ENCODE measurements at regions of chr17 and their contacts with region 1.

Region 1: GRCh38 chr17:28902819-28903545 is at the start of gene DHRS13:
- DNase-seq: peak; percentile 97
- ATAC-seq: peak; percentile 90
- H3K4me3 Mint-ChIP-seq: peak within 1 kb of the TSS; percentile 82
- H3K27ac Mint-ChIP-seq: peak within 1 kb of the TSS; percentile 77
- H3K4me1 Mint-ChIP-seq: peaks cover 37% of the 10 kb centered on the region
- H3K27me3 Mint-ChIP-seq: no peaks in the 10 kb centered on the region
- CTCF ChIP-seq: peak; percentile 82
- total RNA-seq, gene DHRS13: 32.0 and 39.6 TPM in 2 replicates

Region 2: DNA sequence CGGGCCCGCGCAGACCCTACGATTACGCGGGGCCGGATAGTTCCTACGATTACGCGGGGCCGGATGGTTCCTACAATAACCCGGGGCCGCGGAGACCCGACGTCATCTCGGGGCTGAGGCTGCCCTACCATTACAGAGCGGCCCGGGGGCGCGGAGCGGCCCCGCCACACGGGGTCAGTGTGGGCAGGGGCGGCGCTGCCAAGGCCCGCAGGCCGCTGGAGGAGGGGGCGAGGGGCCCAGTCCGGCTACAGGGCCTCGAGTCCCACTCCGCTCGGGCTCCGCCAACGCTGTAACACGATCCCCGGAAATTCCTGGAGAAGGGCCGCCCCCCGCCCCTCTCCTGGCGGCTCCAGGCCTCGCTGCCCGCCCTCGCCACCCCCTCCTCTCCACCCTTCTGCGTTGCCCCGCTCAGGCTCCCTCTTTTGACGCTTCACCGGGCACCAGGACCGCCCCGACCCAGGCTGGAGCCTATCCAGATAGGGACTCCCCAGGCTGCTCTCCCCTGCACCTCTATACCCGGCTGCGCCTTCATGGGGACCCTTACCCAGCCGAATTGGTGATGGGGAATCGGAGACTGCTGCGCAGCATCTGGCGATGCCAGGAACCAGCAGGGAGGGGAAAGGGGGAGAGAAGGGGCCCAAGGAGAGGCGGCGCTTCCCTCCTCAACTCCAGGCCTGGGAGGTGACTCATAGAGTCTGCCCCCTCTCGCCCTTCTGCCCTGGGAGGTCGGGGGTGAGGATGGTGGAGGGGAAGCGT is 185.2 kb before region 1 on chr17 and contains the start of gene RAB34:
- CTCF ChIA-PET with region 1: interaction called, 3 read pairs
- POLR2A ChIA-PET with region 1: interaction called, 21 read pairs
- intact Hi-C with region 1: loop called (anchors 2 kb)
- DNase-seq: peak; percentile 46
- ATAC-seq: peak; percentile 14
- H3K4me3 Mint-ChIP-seq: peak within 1 kb of the TSS; percentile 79
- H3K27ac Mint-ChIP-seq: peak within 1 kb of the TSS; percentile 85
- H3K4me1 Mint-ChIP-seq: peaks cover 49% of the 10 kb centered on the region
- H3K27me3 Mint-ChIP-seq: no peaks in the 10 kb centered on the region
- CTCF ChIP-seq: no peak
- total RNA-seq, gene RAB34: 21.3 and 23.9 TPM in 2 replicates

Region 3: DNA sequence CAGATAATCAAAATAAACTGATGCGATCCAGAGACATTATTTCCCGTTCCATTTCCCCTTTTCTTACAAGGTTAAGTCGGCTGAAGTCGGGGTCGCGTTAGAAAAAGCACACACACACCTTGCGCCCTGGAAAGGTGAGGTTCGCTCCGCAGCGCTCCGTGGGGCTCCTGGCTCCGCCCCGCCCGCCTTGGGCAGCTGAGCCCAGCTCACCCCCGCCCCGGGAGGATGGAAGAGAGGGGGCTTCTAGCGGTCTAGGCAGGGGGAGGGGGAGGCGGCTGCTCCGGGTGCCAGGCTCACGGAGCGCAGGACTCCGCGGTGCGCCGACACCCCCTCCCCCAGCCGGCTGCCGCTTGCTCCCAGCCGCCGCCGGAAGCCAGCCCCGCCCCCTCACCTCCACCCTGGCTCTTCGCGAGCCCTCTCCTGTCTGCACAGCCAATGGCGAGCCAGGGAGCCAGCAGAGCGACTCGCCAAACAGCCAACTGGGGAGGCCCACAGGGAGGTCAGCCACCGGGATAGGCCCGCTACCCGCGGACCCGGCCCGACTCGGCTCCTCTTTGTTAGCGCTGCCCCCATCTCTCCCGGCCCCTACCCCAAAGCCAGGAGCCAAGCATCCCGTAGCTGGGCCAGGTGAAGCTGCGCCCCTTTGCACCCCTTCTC is 90.8 kb before region 1 on chr17:
- CTCF ChIA-PET with region 1: interaction called, 3 read pairs
- POLR2A ChIA-PET with region 1: no interaction called
- intact Hi-C with region 1: loop called (anchors 1 kb)
- DNase-seq: peak; percentile 89
- ATAC-seq: peak; percentile 100
- H3K4me3 Mint-ChIP-seq: peak overlapping the region; percentile 87
- H3K27ac Mint-ChIP-seq: peak overlapping the region; percentile 83
- H3K4me1 Mint-ChIP-seq: peaks cover 31% of the 10 kb centered on the region
- H3K27me3 Mint-ChIP-seq: no peaks in the 10 kb centered on the region
- CTCF ChIP-seq: no peak

Region 4: DNA sequence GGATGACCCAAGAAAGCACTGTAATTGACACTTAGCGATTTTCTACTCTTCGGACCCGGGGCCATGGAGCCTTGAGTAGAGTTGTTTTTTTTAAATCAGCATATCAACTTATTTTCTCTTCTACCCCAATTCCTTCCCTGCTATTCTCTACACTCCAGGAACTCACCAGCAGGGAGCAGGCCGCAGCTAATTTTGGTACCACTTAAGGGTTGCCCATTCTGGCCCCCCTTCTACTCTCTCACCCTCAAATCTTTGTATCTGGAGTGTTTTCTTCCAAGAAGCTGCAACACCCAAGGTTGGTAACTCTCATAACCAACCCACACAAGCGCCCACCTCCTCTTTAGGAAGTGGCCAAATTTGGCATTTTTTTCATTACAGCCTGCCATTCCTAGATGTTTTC is 53.7 kb before region 1 on chr17:
- CTCF ChIA-PET with region 1: interaction called, 4 read pairs
- POLR2A ChIA-PET with region 1: interaction called, 7 read pairs
- intact Hi-C with region 1: loop called (anchors 1 kb)
- DNase-seq: no peak
- ATAC-seq: no peak
- H3K4me3 Mint-ChIP-seq: no peak overlapping the region
- H3K27ac Mint-ChIP-seq: no peak overlapping the region
- H3K4me1 Mint-ChIP-seq: peaks cover 3% of the 10 kb centered on the region
- H3K27me3 Mint-ChIP-seq: no peaks in the 10 kb centered on the region
- CTCF ChIP-seq: no peak

Region 5: DNA sequence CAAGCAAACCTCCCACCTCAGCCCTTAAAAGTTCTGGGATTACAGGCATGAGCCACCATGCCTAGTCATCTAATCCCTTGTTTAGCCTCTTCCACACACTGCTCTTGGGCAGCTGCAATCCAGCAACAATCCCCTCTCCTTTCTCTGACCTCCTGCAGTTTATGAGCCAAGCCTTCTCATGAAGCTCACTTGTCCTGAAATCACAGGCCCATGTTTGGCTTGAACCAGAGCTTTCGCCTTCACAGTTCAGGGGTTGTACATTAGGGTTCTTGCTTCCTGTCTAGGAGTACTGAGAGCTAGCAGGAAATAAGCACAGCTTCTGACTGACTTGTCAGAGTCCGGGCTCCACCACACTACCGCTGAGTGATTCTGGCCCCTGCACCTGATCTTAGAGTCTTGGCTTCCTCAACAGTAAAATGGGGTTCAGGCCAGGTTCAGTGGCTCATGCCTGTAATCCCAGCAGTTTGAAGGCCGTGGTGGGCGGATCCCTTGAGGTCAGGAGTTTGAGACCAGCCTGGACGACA is 31.9 kb before region 1 on chr17:
- CTCF ChIA-PET with region 1: interaction called, 5 read pairs
- POLR2A ChIA-PET with region 1: interaction called, 27 read pairs
- intact Hi-C with region 1: loop called (anchors 1 kb)
- DNase-seq: no peak
- ATAC-seq: peak; percentile 99
- H3K4me3 Mint-ChIP-seq: peak overlapping the region; percentile 50
- H3K27ac Mint-ChIP-seq: peak overlapping the region; percentile 95
- H3K4me1 Mint-ChIP-seq: peaks cover 30% of the 10 kb centered on the region
- H3K27me3 Mint-ChIP-seq: no peaks in the 10 kb centered on the region
- CTCF ChIP-seq: no peak

Region 6: GRCh38 chr17:28963055-28963647 is 60.2 kb after region 1 on chr17:
- CTCF ChIA-PET with region 1: no interaction called
- POLR2A ChIA-PET with region 1: no interaction called
- intact Hi-C with region 1: no loop called
- DNase-seq: no peak
- ATAC-seq: no peak
- H3K4me3 Mint-ChIP-seq: no peak overlapping the region
- H3K27ac Mint-ChIP-seq: no peak overlapping the region
- H3K4me1 Mint-ChIP-seq: peaks cover 8% of the 10 kb centered on the region
- H3K27me3 Mint-ChIP-seq: peaks cover 16% of the 10 kb centered on the region
- CTCF ChIP-seq: no peak

Region 7: GRCh38 chr17:29102741-29103181 is 199.8 kb after region 1 on chr17:
- CTCF ChIA-PET with region 1: no interaction called
- POLR2A ChIA-PET with region 1: no interaction called
- intact Hi-C with region 1: no loop called
- DNase-seq: no peak
- ATAC-seq: no peak
- H3K4me3 Mint-ChIP-seq: no peak overlapping the region
- H3K27ac Mint-ChIP-seq: no peak overlapping the region
- H3K4me1 Mint-ChIP-seq: no peaks in the 10 kb centered on the region
- H3K27me3 Mint-ChIP-seq: no peaks in the 10 kb centered on the region
- CTCF ChIP-seq: no peak

Measured in activated B cell treated with CpG ODN at 0.5 μM for 24 hours (primary cell).